MCF 10A (cell line): ENCODE measurements at regions of chr5 and their contacts with region 1.

Region 1: DNA sequence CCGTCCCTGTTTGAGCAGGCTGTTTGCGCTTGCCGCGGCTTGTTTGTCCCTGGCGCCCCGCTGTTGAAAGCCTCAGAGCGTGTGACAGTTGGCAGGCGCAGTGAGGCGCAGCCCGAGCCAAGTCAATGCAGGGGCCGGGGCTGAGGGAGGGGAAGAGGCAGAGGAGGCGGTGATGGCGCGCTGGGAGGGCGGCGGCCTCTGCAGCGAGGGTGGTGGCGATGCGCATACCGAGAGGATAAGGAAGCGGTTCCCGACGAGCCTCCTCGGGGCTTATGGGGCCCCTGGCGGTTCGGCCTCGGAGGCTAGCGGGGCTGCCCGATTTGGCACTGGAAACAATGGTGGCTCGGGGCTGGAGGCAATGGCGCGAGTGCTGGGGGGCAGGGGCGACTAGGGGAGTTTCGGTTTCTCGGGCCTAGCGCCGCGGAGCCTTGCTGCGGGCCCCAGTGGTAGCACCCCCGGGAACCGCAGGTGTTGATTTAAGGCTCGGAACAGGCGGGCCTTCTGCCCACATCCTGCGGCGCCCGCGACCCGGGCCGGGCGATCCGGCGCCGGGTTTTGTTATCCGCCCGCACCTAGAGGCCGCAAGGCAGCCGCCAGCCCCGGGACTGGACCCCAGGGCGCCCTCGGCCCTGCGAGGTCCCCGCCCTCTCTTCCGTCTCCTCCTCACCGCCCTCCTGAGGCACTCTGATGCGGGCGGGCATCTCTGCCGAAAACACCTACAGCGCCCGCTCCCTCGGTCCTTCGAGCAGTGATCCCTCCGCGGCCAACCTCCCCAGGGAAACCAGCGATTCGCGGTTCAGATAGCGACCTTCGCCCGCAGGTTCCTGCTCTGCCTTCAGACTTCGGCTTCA is 947 bp upstream of the LNPEP start:
- DNase-seq: peak; percentile 96
- H3K4me3 Mint-ChIP-seq: peak overlapping the region; percentile 96
- H3K27ac Mint-ChIP-seq: peak overlapping the region; percentile 82
- H3K4me1 Mint-ChIP-seq: peaks cover 23% of the 10 kb centered on the region
- H3K27me3 Mint-ChIP-seq: no peaks in the 10 kb centered on the region
- CTCF ChIP-seq: no peak

Region 2: GRCh38 chr5:96876292-96876850 is 58.6 kb before region 1 on chr5 and contains the start of gene ERAP2:
- CTCF ChIA-PET with region 1: interaction called, 3 read pairs
- POLR2A ChIA-PET with region 1: interaction called, 25 read pairs
- intact Hi-C with region 1: loop called (anchors 1 kb)
- DNase-seq: peak; percentile 50
- H3K4me3 Mint-ChIP-seq: peak within 1 kb of the TSS; percentile 81
- H3K27ac Mint-ChIP-seq: peak within 1 kb of the TSS; percentile 95
- H3K4me1 Mint-ChIP-seq: peaks cover 37% of the 10 kb centered on the region
- H3K27me3 Mint-ChIP-seq: no peaks in the 10 kb centered on the region
- CTCF ChIP-seq: no peak
- total RNA-seq, gene ERAP2: 2.5 and 3.9 TPM in 2 replicates

Region 3: DNA sequence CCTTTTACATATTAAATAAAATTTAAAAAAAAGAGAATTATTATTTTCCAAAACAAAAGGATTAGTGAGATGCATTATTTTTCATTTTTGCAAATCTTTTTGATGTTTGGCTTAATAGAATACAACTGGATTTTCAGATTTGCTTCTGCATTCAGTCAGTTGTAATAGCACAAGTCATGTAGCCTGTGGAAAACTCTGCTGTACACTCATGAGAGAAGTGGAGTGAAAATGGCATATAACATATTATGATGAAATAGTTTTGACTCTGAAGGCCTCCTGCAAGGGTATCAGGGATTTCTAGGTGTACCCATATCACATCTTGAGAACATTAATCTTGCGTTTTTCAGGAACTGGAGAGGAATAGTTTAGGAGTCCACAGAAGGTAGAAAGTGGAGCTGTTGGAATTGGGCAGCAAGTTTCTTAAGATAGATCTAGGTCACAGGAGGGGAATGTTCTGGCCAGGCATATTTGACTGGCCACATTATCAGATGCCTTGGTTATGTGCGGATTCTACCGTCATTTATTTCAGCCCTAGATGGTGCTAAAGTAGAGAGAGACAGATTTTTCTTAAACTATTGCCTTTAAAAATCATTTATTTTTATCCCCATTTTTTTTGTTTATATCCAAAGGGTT is 17.3 kb after region 1 on chr5:
- CTCF ChIA-PET with region 1: interaction called, 4 read pairs
- POLR2A ChIA-PET with region 1: interaction called, 10 read pairs
- intact Hi-C with region 1: no loop called
- DNase-seq: no peak
- H3K4me3 Mint-ChIP-seq: no peak overlapping the region
- H3K27ac Mint-ChIP-seq: peak overlapping the region; percentile 82
- H3K4me1 Mint-ChIP-seq: peaks cover 19% of the 10 kb centered on the region
- H3K27me3 Mint-ChIP-seq: no peaks in the 10 kb centered on the region
- CTCF ChIP-seq: no peak